ENCODE measurements at regions of chr6 and their contacts with region 1.

Region 1: DNA sequence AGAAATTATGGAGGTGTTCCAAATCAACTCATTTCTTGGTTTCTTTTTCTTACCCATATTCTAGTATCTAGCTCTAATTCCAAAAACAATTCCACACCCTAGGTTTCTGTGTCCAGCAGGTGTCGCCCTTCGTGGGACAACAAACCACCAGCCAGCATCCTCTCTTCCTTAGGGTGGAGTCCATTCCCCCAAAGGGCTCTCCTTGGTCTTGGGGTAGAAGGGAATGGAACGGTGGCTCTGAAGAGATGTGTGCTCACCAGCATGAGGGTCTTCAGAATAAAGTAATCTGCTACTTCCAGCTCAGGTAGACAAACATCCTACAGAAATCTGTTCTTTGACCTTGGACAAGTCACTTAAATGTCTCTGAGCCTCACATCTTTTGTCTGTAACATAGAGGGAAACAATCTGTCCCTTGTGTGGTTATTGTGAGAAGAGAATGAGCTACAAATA is 7.2 kb downstream of the HLA-DMB start:
- DNase-seq: peak; percentile 84
- H3K4me3 Mint-ChIP-seq: no peak overlapping the region
- H3K27ac Mint-ChIP-seq: no peak overlapping the region
- H3K4me1 Mint-ChIP-seq: no peaks in the 10 kb centered on the region
- H3K27me3 Mint-ChIP-seq: no peaks in the 10 kb centered on the region

Region 2: DNA sequence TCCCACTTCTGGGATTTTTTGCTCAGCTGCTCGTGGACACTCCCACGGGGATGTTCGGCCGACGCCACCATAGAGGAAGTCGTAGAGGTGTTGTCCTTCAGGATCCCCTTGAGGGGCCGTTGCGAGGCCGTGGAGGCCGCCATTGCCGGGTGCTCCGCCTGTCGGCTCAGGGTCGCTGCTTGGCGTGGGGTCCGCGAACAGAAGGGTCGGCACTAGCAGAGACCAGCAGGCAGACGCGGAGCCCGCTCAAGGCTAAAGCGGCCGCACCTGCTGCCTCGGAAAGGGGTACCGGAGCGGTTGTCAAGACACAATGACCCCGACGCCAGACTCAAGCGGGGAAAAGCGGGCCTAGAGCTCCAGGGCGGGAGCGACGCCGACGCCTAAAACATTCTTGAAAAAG is 54.0 kb before region 1 on chr6:
- CTCF ChIA-PET with region 1: interaction called, 18 read pairs
- POLR2A ChIA-PET with region 1: no interaction called
- intact Hi-C with region 1: no loop called
- DNase-seq: no peak
- H3K4me3 Mint-ChIP-seq: no peak overlapping the region
- H3K27ac Mint-ChIP-seq: no peak overlapping the region
- H3K4me1 Mint-ChIP-seq: peaks cover 17% of the 10 kb centered on the region
- H3K27me3 Mint-ChIP-seq: no peaks in the 10 kb centered on the region

Region 3: DNA sequence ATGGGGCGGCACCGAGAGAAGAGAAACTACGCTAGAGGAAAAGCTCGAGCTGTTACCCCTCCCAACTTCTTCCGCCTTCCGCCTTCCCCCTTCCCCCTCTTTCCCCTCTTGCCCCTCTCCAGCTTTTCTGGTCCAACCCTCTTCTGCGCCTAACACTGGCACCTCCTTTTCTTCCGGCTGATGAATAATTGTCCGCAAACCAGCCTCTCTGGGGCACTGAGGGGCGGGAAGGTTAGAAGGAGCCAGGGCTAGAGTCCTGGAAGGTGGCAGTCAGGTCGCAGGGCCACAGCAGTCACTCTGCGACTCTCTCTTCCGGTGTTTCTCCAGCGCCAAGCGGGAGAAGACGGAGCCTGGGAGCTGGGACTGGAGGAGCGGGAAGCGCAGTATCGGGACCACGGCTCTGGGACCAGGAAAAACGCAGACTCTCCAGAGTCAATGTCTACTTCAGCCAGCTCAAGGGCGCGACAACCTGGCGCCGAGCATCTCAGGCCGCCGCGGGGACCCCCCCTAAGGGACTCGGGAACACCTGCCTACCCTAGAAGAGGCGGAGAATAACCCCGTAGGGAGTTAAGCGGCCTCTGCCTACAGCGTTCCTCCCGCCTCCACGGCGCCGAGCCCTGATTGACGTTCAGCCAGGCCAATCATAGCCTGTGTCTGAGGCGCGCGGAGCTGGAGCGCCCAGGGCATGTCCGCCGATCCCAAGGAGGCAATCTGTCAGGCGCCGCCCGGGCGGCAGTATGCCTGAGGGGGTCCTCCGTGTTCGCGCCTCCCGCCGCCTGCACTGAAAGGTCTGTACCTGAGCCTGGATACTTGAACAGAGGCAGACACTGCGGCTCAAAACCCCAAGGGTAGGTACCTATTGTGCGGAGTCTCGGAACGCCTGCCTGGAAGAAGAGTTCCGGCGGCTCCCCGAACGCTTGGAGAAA is 39.3 kb before region 1 on chr6:
- CTCF ChIA-PET with region 1: interaction called, 11 read pairs
- POLR2A ChIA-PET with region 1: interaction called, 4 read pairs
- intact Hi-C with region 1: no loop called
- DNase-seq: peak; percentile 97
- H3K4me3 Mint-ChIP-seq: peak overlapping the region; percentile 98
- H3K27ac Mint-ChIP-seq: peak overlapping the region; percentile 94
- H3K4me1 Mint-ChIP-seq: peaks cover 35% of the 10 kb centered on the region
- H3K27me3 Mint-ChIP-seq: no peaks in the 10 kb centered on the region

Region 4: DNA sequence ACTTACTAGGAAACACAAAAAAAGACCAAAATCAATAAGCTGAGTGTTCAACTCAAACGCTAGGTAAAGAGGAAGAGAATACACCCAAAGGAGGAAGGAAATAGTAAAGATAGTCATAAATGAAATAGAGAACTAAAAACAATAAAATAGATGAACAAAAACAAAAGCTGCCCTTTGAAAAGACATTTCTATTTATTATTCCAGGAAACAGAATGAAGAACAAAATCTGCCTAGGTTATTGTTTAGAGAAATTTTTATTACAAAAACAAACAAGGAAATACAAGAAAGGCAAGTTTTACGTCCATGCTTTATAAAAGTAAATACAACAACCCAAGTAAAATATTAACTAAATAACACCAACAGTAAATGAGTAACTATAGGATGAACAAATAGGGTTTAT is 12.9 kb before region 1 on chr6:
- CTCF ChIA-PET with region 1: interaction called, 10 read pairs
- POLR2A ChIA-PET with region 1: no interaction called
- intact Hi-C with region 1: no loop called
- DNase-seq: no peak
- H3K4me3 Mint-ChIP-seq: no peak overlapping the region
- H3K27ac Mint-ChIP-seq: no peak overlapping the region
- H3K4me1 Mint-ChIP-seq: peaks cover 4% of the 10 kb centered on the region
- H3K27me3 Mint-ChIP-seq: peaks cover 4% of the 10 kb centered on the region

Region 5: GRCh38 chr6:32952817-32953739 is 19.4 kb after region 1 on chr6 and contains the start of gene HLA-DMA:
- CTCF ChIA-PET with region 1: interaction called, 216 read pairs
- POLR2A ChIA-PET with region 1: interaction called, 4 read pairs
- intact Hi-C with region 1: loop called (anchors 1 kb)
- DNase-seq: peak; percentile 83
- H3K4me3 Mint-ChIP-seq: peak within 1 kb of the TSS; percentile 64
- H3K27ac Mint-ChIP-seq: peak within 1 kb of the TSS; percentile 39
- H3K4me1 Mint-ChIP-seq: peaks cover 51% of the 10 kb centered on the region
- H3K27me3 Mint-ChIP-seq: no peaks in the 10 kb centered on the region
- total RNA-seq, gene HLA-DMA: 9.6 to 10.2 TPM

Measured in activated CD4-positive, alpha-beta memory T cell treated with anti-CD3 and anti-CD28 coated beads for 36 hours (primary cell).